Right ventricle myocardium inferior (tissue), 1 donor: ENCODE measurements at regions of chr20 and their contacts with region 1.

Region 1: GRCh38 chr20:38255393-38255792 is 5.1 kb downstream of the KIAA1755 start:
- DNase-seq: no peak
- ATAC-seq: peak; percentile 24

Region 2: DNA sequence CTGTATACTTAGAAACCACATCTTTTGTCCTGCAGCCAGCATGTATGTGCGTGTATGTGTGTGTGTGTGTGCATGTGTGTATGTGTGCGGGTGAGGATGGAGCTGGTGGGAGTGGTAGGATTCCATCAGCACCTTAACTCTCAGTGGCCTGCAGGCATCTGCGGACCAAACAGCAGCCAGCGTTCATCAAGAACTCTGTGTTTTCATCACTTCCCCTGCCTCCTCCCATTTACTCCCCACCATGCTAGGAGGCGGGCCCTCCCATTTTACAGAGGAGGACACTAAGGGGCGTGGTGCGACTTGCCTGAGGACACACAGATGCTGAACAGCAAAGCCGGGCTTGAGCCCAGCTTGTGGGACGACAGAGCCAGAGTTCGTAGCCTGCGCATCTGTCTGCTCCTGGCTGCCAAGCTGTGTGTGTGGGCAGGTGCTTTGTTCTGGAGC is 343.5 kb before region 1 on chr20:
- intact Hi-C with region 1: no loop called
- DNase-seq: peak; percentile 77
- ATAC-seq: peak; percentile 88

Region 3: DNA sequence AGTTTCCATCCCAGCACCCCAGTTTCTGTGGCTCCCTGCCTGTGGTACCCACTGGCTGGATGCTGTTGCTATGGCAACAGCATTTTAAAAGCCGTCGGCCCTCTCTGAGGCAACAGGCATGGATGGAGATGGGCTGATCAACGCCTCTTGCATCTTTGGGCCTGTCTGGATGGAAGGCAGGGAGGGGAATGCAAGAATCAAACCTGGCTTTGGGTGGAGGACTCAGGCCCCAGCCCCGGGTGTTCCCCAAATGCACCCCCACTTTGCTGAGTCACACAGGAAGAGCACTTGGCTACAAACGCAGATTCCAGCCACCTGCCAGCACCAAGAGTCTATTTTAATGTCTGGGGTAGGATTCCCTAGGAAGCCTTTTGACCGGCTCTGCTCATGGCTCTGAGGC is 44.7 kb before region 1 on chr20:
- intact Hi-C with region 1: no loop called
- DNase-seq: no peak
- ATAC-seq: no peak

Region 4: DNA sequence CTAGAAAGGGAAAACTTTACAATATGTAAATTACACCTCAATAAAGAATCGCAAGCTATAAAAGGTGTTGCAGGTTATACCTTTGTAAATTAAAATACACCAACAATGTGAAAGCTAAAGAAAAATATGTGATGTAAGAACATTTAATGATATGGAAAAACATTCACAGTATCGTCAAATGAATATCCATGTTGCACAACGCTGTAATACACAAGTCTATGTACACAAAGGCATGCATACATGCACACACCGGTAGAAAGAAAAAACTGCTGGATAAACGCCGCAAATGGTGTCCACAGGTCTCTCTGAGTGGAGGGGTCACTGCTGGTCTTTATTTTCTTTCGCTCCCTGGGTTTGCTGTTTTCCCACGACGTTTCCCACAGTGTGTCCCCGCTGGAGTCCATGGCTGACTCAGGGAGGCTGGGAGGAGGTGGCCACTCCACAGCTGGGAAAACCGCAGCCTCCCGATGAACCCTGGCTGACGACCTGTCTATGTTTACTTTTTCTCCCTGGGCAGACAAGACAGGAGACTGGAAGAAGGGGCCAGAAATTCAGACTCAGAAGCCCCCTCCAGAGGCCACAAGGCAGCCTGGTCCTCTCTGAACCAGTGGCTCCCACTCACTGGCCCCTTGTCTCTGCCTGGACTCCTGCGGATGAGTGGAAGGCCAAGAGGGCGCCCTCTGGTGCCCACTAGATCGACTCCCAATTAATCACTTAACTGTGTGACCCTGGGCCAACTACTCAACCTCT is 35.6 kb after region 1 on chr20:
- intact Hi-C with region 1: loop called (anchors 5 kb)
- DNase-seq: no peak
- ATAC-seq: peak; percentile 65

Region 5: DNA sequence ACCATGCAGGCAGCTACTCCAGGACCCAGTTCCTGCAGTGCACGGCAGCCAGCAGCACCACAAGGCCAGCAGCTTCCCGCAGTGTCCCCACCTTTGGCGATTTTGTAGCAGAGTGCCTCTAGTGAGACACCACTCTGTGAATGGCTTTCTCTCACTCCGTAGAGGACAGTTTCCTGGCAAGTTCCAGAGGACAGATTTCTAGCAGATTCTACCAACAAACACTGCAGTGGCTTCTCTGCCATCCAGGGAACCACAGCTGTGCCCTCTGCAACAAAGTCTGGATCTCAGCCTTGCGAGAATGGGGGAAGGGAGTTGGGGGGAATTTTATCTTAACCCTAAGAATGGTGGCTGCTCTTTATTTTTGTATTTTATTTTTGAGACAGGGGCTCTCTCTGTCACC is 151.1 kb after region 1 on chr20:
- intact Hi-C with region 1: no loop called
- DNase-seq: no peak
- ATAC-seq: no peak